PC-3 (cell line): ENCODE measurements at regions of chr13 and their contacts with region 1.

Region 1: DNA sequence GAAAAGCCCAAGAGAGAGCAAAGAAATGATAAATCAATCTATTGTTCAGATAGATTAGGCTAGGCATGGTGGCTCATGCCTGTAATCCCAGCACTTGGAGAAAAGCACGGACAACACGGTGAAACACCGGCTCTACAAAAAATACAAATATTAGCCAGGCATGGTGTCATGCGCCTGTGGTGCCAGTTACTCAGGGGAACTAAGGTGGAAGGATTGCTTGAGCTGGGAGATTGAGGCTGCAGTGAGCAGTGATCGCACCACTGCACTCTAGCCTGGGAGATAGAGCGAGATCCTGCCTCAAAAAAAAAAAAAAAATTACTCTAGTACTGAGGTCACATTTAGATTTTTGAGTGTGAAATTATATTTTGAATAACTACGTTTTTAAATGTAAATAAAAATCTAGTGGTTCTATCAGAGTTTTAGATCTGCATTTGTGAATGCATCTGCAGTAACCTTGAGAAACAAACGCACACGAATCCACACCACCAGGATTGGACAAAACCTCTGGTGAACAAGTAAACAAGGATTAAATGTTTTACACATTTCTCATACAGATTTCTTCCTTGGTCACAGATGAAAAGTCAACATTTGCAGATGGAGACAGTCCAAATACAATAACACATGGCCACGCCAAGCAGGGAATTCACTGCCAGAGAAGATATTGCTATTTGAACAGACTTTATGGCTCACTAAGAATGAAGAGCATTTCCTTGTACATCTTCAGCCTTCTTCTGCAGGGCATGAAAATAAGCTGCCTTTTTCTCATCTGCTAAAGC is 917.6 kb downstream of the PCDH9 start:
- DNase-seq: peak; percentile 80
- ATAC-seq: peak; percentile 82
- H3K4me3 ChIP-seq: peak overlapping the region; percentile 52
- H3K27ac ChIP-seq: peak overlapping the region; percentile 96
- H3K4me1 ChIP-seq: peaks cover 38% of the 10 kb centered on the region
- H3K27me3 ChIP-seq: no peaks in the 10 kb centered on the region
- CTCF ChIP-seq: no peak

Region 2: DNA sequence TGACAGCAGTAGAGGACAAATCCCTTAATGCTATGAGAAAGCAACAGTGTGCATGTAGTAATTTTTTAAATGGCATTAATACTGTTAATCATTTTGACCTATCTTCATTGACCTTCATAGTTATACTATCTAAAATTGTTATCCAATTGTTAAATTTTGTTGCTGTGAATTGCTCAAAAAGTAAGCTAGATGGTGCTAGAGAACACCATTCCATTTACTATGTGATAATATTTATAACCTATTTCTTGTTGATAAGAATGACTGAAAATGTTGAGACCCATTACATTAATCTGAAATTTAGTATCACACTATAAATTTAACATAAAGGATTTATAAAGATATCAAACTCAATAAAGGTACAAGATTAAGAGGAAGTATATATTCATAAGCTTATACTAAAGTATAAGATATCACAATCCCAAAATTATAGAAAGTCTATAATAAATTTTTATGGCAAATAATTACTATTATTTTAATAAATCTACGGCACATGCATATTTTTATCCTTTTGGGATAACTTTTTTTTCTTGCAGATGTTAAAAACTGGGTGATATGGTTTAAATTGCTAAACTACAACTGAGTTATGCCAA is 655.7 kb before region 1 on chr13:
- CTCF ChIA-PET with region 1: no interaction called
- POLR2A ChIA-PET with region 1: no interaction called
- intact Hi-C with region 1: loop called (anchors 5 kb)
- DNase-seq: peak; percentile 37
- ATAC-seq: no peak
- H3K4me3 ChIP-seq: no peak overlapping the region
- H3K27ac ChIP-seq: no peak overlapping the region
- H3K4me1 ChIP-seq: no peaks in the 10 kb centered on the region
- H3K27me3 ChIP-seq: no peaks in the 10 kb centered on the region
- CTCF ChIP-seq: peak; percentile 65

Region 3: DNA sequence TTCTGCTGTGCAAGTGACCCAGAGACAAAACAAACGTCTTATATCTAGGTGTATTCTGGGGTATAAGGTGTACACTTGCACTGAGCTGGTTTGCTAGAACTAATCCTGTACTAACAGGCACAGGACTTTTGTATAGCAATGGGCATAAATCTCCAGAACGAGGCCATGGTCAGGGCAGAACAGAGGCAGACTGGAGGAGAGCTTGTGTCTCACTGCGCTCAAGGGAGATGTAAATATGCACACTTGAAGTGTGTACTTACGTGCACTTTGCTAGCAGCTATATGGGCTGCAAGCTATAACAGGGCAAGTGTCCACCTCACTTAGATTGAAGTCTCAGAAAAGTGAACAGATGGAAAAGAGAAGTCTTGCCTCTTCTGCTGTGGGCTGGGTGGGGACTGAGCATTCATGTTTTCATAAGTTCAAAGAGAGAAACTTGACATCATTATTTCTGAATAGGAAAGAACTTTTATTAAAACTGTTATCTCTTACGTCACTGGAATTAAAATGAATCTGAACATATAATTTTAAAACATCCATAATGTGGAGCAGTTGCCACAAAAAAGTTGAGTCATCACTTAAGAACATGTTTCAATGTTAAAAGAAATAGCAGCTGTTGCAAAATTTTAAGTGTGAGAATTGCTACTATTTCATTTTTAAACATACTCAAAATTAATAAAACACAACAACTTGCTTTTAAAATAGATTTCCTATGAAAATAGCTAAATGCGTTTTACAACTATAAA is 29.3 kb after region 1 on chr13:
- CTCF ChIA-PET with region 1: no interaction called
- POLR2A ChIA-PET with region 1: no interaction called
- intact Hi-C with region 1: loop called (anchors 2 kb)
- DNase-seq: no peak
- ATAC-seq: no peak
- H3K4me3 ChIP-seq: no peak overlapping the region
- H3K27ac ChIP-seq: no peak overlapping the region
- H3K4me1 ChIP-seq: peaks cover 12% of the 10 kb centered on the region
- H3K27me3 ChIP-seq: no peaks in the 10 kb centered on the region
- CTCF ChIP-seq: no peak

Region 4: DNA sequence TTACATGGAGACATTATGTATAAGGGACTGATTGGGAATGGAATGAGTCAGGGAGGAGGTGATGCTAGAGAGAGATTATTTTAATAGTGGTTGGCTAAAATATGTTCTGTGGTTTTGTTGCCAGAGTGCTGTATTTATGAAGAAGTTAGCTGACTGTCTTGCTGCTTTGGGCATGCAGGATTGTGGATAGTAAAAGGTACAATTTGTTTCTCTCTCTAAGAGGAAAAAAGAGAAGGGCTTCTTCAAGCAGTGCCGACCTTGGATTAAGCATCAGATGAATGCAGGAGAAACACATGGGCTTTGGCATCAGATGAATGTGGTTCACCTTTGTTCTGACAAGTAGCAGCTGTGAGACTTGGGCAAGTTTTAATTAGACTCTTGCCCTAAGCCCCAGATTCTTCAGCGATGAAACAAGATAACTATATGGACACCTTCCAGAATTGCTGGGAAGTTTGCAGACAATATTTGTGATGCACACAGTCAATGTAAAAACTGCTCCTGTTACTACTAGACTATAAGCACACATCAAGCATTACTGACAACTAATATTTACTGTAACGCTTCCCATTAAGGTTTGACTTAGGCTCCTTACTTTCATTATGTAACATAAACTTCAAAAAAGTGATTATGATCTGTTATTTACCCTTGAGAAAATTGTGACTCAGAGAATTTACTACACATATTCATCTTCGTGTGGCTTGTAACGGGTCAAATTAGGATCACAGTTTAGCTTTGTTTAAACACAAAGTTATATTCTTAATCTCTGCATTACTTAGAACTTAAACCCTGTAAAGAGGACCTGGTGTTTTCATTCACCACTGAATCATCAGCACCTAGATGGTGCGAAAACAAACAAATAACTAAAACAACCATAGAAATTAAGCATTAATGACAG is 93.7 kb after region 1 on chr13:
- CTCF ChIA-PET with region 1: interaction called, 7 read pairs
- POLR2A ChIA-PET with region 1: no interaction called
- intact Hi-C with region 1: loop called (anchors 1 kb)
- DNase-seq: peak; percentile 58
- ATAC-seq: peak; percentile 67
- H3K4me3 ChIP-seq: peak overlapping the region; percentile 15
- H3K27ac ChIP-seq: peak overlapping the region; percentile 86
- H3K4me1 ChIP-seq: peaks cover 51% of the 10 kb centered on the region
- H3K27me3 ChIP-seq: no peaks in the 10 kb centered on the region
- CTCF ChIP-seq: no peak

Region 5: GRCh38 chr13:67230404-67231288 is 918.1 kb after region 1 on chr13:
- CTCF ChIA-PET with region 1: no interaction called
- POLR2A ChIA-PET with region 1: no interaction called
- intact Hi-C with region 1: loop called (anchors 5 kb)
- DNase-seq: peak; percentile 89
- ATAC-seq: peak; percentile 83
- H3K4me3 ChIP-seq: peak overlapping the region; percentile 88
- H3K27ac ChIP-seq: no peak overlapping the region; the same call in 1 of the 2 replicates
- H3K4me1 ChIP-seq: 0 out of 2 replicates have a peak, but pooled peaks cover 3% of the 10 kb centered on the region
- H3K27me3 ChIP-seq: no peaks in the 10 kb centered on the region
- CTCF ChIP-seq: no peak